A549 (cell line): ENCODE measurements at regions of chr2 and their contacts with region 1.

Region 1: DNA sequence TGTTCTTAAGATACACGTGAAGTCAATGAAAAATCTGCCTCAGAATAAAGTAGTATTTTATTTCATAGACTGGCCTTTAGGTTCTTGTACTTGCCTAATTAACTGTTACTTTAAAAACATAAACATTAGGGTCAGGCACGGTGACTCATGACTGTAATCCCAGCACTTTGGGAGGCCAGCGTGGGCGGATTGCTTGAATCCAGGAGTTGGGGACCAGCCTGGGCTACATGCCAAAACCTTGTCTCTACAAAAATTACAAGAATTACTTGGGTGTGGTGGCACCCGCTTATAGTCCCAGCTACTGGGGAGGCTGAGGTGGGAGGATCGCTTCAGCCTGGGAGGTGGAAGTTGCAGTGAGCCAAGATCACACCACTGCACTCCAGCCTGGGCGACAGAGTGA is 16.0 kb upstream of the SNORC start:
- DNase-seq: peak in 1 of 2 experiments; percentile 84
- ATAC-seq: peak in 1 of 2 experiments; percentile 10; a peak in 3 of 6 replicates
- H3K4me3 ChIP-seq: no peak overlapping the region
- H3K27ac ChIP-seq: peak overlapping the region; percentile 96 to 98
- H3K4me1 ChIP-seq: peaks cover 74% of the 10 kb centered on the region
- CTCF ChIP-seq: no peak
- EP300 ChIP-seq: peak; percentile 71 to 72; a peak in 2 of 5 replicates
- POLR2A ChIP-seq: no peak
- RAD21 ChIP-seq: peak; percentile 11 to 30; a peak in 3 of 5 replicates

Region 2: GRCh38 chr2:232838406-232838874 is 15.6 kb before region 1 on chr2:
- CTCF ChIA-PET with region 1: interaction called, 17 read pairs
- POLR2A ChIA-PET with region 1: interaction called, 4 read pairs
- DNase-seq: peak in 1 of 2 experiments; percentile 13
- ATAC-seq: peak in 1 of 2 experiments; percentile 49; a peak in 3 of 6 replicates
- H3K4me3 ChIP-seq: no peak overlapping the region
- H3K27ac ChIP-seq: peak overlapping the region; percentile 43 to 62; a peak in 5 of 6 replicates
- H3K4me1 ChIP-seq: peaks cover 18% of the 10 kb centered on the region
- CTCF ChIP-seq: no peak
- EP300 ChIP-seq: no peak
- POLR2A ChIP-seq: no peak
- RAD21 ChIP-seq: no peak

Region 3: DNA sequence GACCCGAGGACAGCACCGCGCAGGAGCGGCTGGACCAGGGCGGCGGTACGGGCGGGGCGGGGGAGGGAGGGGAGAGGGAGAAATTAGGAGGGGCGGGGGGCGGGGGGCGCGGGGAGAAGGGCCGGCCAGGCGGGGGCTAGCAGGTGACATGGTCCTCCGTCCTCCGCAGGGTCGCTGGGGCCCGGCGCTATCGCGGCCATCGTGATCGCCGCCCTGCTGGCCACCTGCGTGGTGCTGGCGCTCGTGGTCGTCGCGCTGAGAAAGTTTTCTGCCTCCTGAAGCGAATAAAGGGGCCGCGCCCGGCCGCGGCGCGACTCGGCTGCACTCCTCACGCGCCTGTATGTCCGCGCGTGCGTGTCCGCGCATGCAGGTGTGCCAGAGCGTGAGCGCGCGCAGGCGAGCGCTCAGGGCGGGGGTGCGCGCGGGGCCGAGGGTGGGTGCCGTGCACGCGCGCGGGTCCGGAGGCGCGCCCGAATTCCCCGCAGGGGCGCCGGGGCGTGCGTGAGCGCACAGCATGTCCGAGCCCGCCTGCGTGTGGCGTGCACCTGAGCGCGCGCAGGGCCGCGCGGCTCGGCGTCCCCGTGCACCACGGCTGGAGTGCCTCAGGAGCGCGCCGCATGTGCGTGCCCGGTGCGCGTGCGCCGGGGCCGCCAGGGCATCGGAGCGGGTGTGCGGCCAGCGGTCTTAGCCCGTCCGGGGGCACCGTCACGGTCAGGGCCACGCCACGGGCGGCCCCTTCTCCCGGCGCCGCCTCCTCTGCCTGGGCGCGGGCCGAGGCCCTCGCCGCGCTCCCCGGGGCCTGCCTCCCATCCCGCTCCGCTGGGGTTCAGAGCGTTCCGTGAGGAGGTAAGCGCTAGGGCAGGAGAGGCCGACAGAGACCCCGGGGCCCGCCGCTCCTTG is 22.2 kb after region 1 on chr2:
- CTCF ChIA-PET with region 1: interaction called, 10 read pairs
- POLR2A ChIA-PET with region 1: interaction called, 11 read pairs
- DNase-seq: peak; percentile 47 to 72
- ATAC-seq: peak; percentile 57 to 67
- H3K4me3 ChIP-seq: peak overlapping the region; percentile 81
- H3K27ac ChIP-seq: peak overlapping the region; percentile 93 to 97
- H3K4me1 ChIP-seq: peaks cover 55% of the 10 kb centered on the region
- CTCF ChIP-seq: 0 out of 3 replicates have a peak, but pooled peaks have one; percentile 18
- EP300 ChIP-seq: no peak
- POLR2A ChIP-seq: peak; percentile 43; the same call in 1 of the 2 replicates
- RAD21 ChIP-seq: no peak; a peak in 1 of 5 replicates

Region 4: DNA sequence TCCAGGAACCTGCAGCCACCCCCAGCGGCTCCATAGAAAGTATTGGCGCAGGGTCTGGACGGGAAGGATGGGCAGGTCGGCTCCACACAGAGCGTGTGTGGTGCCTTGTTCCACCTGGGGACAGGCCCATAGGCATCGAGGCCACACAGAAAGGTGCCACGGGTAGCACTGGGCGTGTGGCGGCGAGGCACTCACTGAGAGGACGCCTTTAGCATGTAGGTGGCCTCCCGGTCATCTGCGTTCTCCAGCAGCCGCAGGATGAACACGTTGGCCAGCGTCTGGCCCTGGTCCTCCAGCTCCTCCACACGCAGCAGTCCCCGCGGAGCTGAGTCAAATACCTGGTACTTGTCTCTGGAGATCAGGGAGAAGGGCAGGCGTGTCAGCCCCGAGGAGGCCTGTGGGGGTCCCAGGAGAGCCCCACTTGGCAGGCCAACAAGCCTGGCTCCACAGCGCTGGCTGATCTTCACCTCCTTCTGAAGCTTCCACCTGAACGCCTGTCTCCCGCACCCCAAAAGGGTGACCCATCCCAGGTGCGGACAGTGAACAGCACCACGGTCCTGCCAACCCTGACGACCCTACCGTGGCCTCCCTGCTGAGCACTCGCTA is 29.1 kb after region 1 on chr2:
- CTCF ChIA-PET with region 1: interaction called, 10 read pairs
- POLR2A ChIA-PET with region 1: no interaction called
- DNase-seq: no peak
- ATAC-seq: no peak
- H3K4me3 ChIP-seq: no peak overlapping the region
- H3K27ac ChIP-seq: no peak overlapping the region
- H3K4me1 ChIP-seq: peaks cover 27% of the 10 kb centered on the region
- CTCF ChIP-seq: no peak
- EP300 ChIP-seq: no peak
- POLR2A ChIP-seq: no peak
- RAD21 ChIP-seq: no peak

Region 5: DNA sequence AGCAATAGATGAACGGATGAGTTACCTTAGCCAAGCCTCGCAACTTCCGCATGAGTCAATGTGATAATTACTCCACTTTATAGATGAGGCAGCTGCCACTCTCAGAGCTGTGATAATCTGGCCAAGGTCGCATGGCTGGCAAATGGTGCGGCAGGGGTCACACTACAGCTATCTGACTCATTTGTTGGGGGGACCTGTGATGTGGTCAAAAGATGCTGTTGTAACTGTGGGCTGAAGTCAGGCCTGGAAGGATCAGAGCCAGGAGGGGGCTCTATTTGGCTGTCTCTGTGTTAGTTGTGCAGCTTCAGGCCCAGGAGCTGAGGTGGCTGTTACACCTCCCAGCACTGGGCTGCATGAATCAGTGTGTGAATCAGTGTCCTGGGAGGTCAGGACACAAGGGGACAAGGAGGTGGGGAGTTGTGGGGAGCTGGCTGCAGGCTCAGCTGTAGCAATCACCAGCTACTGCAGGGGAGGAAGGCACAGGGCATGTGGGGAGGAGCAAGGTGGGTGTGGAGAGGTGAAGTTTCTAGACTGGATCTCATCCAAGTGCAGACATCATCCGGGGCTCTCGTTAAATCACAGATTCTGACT is 125.9 kb after region 1 on chr2:
- CTCF ChIA-PET with region 1: interaction called, 12 read pairs
- POLR2A ChIA-PET with region 1: no interaction called
- DNase-seq: peak; percentile 79 to 88
- ATAC-seq: peak; percentile 92 to 97
- H3K4me3 ChIP-seq: no peak overlapping the region
- H3K27ac ChIP-seq: peak overlapping the region; percentile 74 to 86
- H3K4me1 ChIP-seq: peaks cover 36% of the 10 kb centered on the region
- CTCF ChIP-seq: peak; percentile 62
- EP300 ChIP-seq: peak in 1 of 2 experiments; percentile 39; a peak in 1 of 5 replicates
- POLR2A ChIP-seq: no peak
- RAD21 ChIP-seq: peak; percentile 87 to 88

Region 6: DNA sequence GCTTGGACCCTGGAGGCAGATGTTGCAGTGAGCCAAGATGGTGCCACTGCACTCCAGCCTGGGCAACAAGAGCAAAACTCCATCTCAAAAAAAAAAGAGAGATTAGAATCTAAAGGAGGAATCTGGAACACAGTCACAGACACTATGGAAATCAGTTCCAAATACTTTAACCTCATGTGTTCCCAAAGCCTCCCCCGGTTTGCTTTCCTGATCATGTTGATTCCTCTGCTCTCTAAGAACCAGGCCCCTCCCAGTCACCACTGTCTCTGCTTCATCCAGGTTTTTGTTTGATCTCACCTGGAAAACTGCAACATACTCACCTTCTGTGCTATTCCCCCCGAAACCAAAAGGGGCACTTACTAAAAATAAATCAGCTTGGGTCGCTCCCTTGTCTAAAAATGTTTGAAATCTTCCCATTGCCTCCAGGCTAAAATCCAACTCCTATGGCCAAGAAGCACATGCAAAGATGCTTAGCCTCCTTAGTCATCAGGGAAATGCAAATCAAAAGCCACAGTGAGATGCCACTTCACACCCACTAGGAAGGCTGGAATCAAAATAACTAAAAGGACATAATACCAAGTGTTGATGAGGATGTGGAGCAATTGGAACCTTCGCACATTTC is 172.2 kb after region 1 on chr2:
- CTCF ChIA-PET with region 1: interaction called, 11 read pairs
- POLR2A ChIA-PET with region 1: interaction called, 6 read pairs
- DNase-seq: peak in 1 of 2 experiments; percentile 19
- ATAC-seq: no peak
- H3K4me3 ChIP-seq: no peak overlapping the region
- H3K27ac ChIP-seq: peak overlapping the region; percentile 57 to 61
- H3K4me1 ChIP-seq: peaks cover 23% of the 10 kb centered on the region
- CTCF ChIP-seq: no peak
- EP300 ChIP-seq: no peak
- POLR2A ChIP-seq: no peak
- RAD21 ChIP-seq: no peak

Region 7: DNA sequence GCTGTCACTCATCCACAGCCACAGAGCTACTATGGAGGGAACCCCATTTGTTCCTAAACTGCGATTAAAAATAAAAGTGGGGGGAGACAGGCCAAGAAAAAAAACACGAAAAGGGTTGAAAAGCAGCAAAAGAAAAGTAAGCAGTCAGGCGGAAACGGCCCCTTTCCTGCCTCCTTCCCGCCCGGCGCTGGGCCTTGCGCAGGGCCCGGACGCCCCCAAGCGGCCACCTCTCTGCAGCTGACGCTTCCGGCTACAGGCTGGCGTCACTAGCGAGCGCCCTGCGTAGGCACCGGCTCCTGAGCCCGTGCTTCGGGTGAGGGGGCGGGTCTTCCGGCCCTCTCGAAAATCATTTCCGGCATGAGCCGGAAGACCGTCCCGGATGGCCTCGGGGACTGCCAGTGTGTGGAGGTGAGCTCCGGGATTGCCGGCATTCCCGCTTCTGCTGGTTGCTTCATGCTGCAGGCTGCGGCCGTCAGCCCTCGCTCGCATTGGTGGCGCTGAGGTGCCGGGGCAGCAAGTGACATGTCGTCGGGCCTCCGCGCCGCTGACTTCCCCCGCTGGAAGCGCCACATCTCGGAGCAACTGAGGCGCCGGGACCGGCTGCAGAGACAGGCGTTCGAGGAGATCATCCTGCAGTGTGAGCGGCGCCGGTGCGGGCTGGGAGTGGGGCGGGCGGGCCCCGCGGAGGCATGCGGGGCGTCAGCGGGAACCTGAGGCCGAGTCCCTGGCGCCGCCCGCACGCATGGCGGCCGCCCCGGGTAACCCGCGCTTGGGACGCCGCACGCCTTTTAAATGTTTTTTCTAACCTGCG is 397.4 kb after region 1 on chr2 and contains the start of gene ATG16L1:
- CTCF ChIA-PET with region 1: interaction called, 26 read pairs
- POLR2A ChIA-PET with region 1: interaction called, 4 read pairs
- DNase-seq: peak; percentile 96 to 98
- ATAC-seq: peak; percentile 95 to 97
- H3K4me3 ChIP-seq: peak within 1 kb of the TSS; percentile 95
- H3K27ac ChIP-seq: peak within 1 kb of the TSS; percentile 91 to 99
- H3K4me1 ChIP-seq: peaks cover 56% of the 10 kb centered on the region
- CTCF ChIP-seq: peak; percentile 98
- EP300 ChIP-seq: no peak
- POLR2A ChIP-seq: peak; percentile 91
- RAD21 ChIP-seq: peak; percentile 97 to 100
- polyA plus RNA-seq, gene ATG16L1: 70.9 and 72.3 TPM in 2 replicates